Activated CD8-positive, alpha-beta T cell treated with anti-CD3 and anti-CD28 coated beads for 36 hours (primary cell): ENCODE measurements at regions of chr2 and their contacts with region 1.

Region 1: DNA sequence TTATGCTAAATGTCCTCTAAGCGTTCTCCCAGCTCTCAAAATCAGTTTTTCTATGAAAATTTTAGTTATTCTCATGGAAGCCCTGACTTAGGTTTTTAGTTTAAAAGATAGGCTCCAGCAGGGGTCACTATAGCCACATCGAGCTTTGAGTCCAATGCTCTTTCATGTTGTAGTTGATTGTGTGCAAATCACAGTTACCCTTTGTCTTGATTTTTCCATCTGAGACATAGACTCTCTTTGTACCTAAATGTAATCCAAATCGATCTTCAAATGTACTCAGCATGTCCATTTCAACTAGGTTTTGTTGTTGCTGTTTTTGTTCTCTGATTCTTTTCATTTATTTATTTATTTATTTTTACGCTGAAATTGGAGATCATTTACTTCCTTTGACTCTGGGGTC is 26.4 kb upstream of the MSTN start:
- DNase-seq: peak; percentile 72
- ATAC-seq: peak; percentile 58
- H3K4me3 Mint-ChIP-seq: no peak overlapping the region
- H3K27ac Mint-ChIP-seq: no peak overlapping the region
- H3K4me1 Mint-ChIP-seq: no peaks in the 10 kb centered on the region
- H3K27me3 Mint-ChIP-seq: no peaks in the 10 kb centered on the region
- CTCF ChIP-seq: peak; percentile 77

Region 2: DNA sequence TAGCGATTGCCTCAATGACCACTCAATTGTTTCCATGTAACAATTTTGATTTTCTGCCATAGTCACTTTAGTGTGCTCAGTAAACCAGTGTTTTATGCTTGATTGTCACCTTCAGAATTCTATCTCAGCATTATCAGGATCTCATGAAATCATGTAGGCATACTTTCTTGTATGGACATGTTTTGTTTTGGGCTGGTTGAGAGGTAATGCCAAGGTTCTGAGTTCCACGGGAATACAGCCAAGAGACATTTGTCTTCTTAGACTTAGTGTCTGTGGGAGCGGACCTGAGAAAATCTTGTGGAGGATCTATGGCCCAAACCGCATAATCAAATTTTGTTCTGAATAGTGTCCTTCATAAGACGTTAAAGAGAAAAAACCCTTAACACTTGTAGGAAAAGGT is 36.6 kb before region 1 on chr2:
- CTCF ChIA-PET with region 1: no interaction called
- POLR2A ChIA-PET with region 1: no interaction called
- intact Hi-C with region 1: no loop called
- DNase-seq: no peak
- ATAC-seq: no peak
- H3K4me3 Mint-ChIP-seq: no peak overlapping the region
- H3K27ac Mint-ChIP-seq: no peak overlapping the region
- H3K4me1 Mint-ChIP-seq: no peaks in the 10 kb centered on the region
- H3K27me3 Mint-ChIP-seq: no peaks in the 10 kb centered on the region
- CTCF ChIP-seq: no peak

Region 3: DNA sequence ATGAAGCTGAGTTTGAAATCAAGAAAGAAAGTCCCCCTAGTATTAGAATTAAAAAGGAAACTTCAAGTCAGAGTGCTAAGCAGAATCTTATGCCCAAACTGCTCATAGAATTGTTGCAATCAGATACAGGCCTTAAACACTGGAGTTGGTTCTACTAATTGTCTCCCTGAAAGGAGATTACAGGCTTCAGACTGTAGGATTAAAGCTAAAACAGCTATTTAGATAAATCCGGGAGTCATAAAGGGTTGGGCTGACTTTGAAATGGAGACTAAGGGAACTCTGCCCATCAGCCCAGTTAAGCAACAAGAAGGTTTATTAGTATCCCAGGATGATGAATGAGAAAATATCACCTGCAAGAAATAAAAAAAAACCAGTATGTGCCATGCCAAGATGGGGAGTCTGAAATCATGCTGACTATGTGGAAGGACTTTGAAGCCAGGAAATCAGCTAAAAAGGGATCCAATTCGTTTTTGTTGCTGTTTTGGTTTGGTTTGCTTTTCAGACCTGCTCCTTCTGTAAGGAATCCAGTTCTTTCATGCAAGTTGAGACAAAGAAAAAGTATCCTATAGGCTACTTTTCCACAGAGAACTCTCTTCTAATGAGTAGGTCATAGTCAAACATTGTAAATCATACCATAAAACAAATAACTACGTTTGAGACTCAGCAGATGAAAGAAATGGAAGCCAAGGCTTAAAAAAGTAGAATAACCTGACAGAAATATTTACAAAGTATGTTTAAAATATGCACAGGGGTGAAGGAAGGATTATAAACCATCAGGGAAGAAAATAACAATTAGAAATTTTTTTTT is 11.2 kb after region 1 on chr2:
- CTCF ChIA-PET with region 1: interaction called, 19 read pairs
- POLR2A ChIA-PET with region 1: no interaction called
- intact Hi-C with region 1: no loop called
- DNase-seq: no peak
- ATAC-seq: no peak
- H3K4me3 Mint-ChIP-seq: no peak overlapping the region
- H3K27ac Mint-ChIP-seq: no peak overlapping the region
- H3K4me1 Mint-ChIP-seq: no peaks in the 10 kb centered on the region
- H3K27me3 Mint-ChIP-seq: peaks cover 2% of the 10 kb centered on the region
- CTCF ChIP-seq: no peak

Region 4: DNA sequence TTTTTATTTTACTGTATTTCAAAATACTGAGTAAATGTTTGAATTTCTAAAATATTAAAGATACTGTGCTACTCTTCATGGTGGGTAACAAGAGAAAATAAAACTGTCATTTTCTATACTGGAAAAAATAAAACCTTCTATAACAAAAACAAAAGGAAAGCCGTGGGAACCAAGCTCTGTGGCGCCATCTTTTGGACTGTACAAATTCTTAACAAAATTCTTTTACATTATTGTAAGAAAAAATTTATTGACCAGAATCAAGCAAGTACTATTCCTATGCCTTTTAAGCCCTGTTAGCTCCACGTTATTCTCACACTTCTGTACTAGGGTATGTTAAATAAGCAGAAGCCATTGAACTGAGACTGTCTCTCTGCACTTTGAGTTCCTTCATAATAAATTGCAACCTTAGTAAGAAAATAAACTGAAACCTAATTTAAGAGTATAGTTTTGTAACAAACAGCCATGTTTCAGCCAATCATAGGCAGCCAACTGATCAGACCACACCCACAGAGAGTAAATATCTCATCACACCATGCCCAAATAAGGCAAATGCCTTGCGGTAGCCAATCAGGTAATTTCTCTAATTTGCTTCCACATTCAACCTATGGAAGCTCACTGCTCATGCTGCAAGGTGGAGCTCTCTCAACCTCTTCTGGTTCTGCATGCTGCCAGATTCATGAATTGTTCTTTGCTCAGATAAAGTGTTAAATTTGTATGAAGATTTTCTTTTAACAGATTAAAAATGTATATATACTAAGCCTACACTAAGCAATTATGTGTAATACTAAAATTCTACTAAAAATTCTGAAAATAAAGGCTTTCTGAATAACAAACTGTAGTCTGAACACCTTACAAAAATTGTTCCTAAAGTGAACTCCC is 188.6 kb after region 1 on chr2:
- CTCF ChIA-PET with region 1: interaction called, 12 read pairs
- POLR2A ChIA-PET with region 1: no interaction called
- intact Hi-C with region 1: loop called (anchors 5 kb)
- DNase-seq: peak; percentile 44
- ATAC-seq: peak; percentile 79
- H3K4me3 Mint-ChIP-seq: no peak overlapping the region
- H3K27ac Mint-ChIP-seq: no peak overlapping the region
- H3K4me1 Mint-ChIP-seq: peaks cover 4% of the 10 kb centered on the region
- H3K27me3 Mint-ChIP-seq: no peaks in the 10 kb centered on the region
- CTCF ChIP-seq: peak; percentile 80

Region 5: DNA sequence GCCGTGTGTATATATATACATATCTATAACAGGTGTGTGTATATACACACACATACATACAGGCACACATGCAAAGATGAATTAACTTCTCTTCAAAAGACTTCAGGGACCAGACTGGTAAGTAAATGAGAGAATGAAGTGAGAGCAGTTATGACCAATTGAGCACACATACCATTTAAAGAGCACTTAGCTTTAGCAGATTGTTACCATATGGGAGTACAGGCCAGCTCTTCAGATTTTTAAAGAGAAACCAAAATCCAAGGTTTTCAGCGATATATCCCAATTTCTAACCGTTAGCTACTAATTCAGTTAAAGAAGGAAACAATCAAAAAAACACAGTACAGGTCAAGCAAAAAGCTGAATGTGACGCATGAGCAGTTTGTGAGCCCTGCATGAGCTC is 278.2 kb after region 1 on chr2:
- CTCF ChIA-PET with region 1: interaction called, 12 read pairs
- POLR2A ChIA-PET with region 1: no interaction called
- intact Hi-C with region 1: loop called (anchors 2 kb)
- DNase-seq: no peak
- ATAC-seq: no peak
- H3K4me3 Mint-ChIP-seq: no peak overlapping the region
- H3K27ac Mint-ChIP-seq: no peak overlapping the region
- H3K4me1 Mint-ChIP-seq: peaks cover 5% of the 10 kb centered on the region
- H3K27me3 Mint-ChIP-seq: no peaks in the 10 kb centered on the region
- CTCF ChIP-seq: no peak

Region 6: DNA sequence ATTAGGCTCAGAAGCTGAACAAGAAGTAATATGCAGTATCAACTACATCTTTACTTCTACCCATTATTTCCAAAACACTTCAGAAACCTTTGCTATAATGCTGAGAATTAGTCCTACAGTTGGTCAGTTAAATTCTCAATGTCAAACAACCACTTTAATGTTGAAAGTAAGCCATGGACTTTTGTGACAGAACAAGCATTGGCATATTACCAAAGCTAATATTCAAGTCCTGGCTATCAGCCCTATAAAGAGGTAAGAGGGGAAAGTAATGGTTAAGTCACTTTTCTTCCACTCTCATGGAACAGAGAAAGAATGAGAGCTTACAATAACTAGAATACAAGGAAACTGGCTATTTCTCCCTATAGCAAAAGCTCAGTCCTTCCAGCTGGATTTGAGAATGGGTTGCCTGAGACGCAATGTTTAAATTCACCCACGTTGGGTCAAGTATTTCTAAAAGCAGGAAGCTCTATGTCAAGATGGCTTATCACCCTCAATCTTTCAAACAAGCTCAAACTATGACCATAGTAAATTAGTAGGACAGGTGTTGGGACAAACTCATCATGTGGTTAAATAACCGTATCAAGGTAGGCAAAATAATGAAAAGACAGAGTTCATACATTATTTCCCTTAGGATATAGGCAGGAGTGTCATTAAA is 287.8 kb after region 1 on chr2:
- CTCF ChIA-PET with region 1: interaction called, 4 read pairs
- POLR2A ChIA-PET with region 1: no interaction called
- intact Hi-C with region 1: loop called (anchors 2 kb)
- DNase-seq: no peak
- ATAC-seq: no peak
- H3K4me3 Mint-ChIP-seq: no peak overlapping the region
- H3K27ac Mint-ChIP-seq: no peak overlapping the region
- H3K4me1 Mint-ChIP-seq: no peaks in the 10 kb centered on the region
- H3K27me3 Mint-ChIP-seq: no peaks in the 10 kb centered on the region
- CTCF ChIP-seq: no peak